Mammary epithelial cell (primary cell): ENCODE measurements at regions of chr2 and their contacts with region 1.

Region 1: GRCh38 chr2:71784734-71785473 is 331.5 kb downstream of the DYSF start:
- DNase-seq: peak; percentile 48
- H3K4me3 ChIP-seq: no peak overlapping the region
- H3K27ac ChIP-seq: no peak overlapping the region
- H3K4me1 ChIP-seq: peaks cover 9% of the 10 kb centered on the region
- H3K27me3 ChIP-seq: peaks cover 2% of the 10 kb centered on the region
- CTCF ChIP-seq: no peak

Region 2: DNA sequence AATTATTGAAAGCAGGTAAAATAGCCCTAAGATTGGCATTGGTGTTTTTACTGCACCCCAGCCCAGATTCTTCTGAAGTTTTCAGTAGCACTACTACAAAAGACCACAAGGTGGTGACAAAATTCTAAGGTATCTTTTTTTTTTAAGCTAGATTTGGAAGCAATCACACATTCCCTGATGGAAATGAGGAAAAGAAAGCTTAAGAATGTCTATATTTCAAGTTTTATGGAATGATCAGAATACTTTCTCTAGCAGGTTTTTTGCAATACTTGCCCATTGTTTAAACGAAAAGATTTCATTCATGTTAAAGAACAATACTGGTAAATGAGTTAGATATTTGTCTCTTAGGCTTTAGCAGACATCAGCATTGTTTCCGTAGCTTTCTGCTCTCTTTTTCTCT is 485.4 kb before region 1 on chr2:
- CTCF ChIA-PET with region 1: no interaction called
- dilution Hi-C with region 1: no loop called
- in situ Hi-C with region 1: no loop called
- intact Hi-C with region 1: loop called (anchors 5 kb)
- DNase-seq: peak; percentile 16
- H3K4me3 ChIP-seq: no peak overlapping the region
- H3K27ac ChIP-seq: no peak overlapping the region
- H3K4me1 ChIP-seq: peaks cover 12% of the 10 kb centered on the region
- H3K27me3 ChIP-seq: no peaks in the 10 kb centered on the region
- CTCF ChIP-seq: peak; percentile 64 to 71